Activated CD4-positive, alpha-beta T cell treated with anti-CD3 and anti-CD28 coated beads for 36 hours (primary cell): ENCODE measurements at regions of chr10 and their contacts with region 1.

Region 1: DNA sequence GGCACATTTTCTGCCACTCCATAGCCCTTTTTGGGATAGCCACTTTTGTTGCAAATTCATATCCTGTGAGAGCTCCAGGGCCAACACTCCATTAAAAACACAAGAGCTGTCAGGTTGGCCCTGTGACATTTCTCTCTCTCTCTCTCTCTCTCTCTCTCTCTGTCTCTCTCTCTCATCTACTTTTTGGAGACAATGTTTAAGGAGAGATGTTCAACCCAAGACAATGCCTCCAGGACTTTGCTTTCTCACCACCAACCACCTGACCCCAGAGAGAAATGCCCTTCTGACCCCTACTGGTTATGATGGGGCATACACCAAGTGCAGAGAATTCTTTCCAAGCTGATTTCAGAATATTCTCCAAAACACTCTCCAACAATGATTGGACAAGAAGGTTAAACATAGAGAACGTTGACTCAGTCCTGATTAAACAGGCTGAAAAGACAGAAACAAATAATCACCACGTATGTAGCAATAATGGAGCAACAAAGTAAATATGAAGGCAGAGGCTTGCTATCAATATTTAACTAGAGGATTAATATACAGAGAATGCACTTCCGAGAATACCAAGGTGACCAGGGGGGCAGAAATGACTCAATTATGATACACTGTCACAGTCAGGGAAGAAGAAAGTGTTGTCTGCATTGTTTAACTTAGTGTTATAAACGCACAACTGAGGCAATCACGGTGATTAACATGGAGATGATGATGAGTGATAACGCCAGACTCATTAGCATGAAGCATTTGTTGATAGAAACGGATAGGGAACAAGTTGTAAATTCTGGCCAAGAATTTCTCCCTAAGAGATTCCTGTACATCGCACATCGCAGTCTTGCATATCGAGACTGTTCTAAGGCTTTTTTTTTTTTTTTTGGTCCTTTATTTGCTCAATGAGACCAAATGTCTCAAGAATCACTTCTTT is 178.5 kb downstream of the NRP1 start:
- DNase-seq: peak; percentile 52
- ATAC-seq: peak; percentile 63
- H3K4me3 Mint-ChIP-seq: no peak overlapping the region
- H3K27ac Mint-ChIP-seq: peak overlapping the region; percentile 34
- H3K4me1 Mint-ChIP-seq: peaks cover 41% of the 10 kb centered on the region
- H3K27me3 Mint-ChIP-seq: peaks cover 7% of the 10 kb centered on the region

Region 2: GRCh38 chr10:32795598-32796183 is 360.3 kb before region 1 on chr10:
- CTCF ChIA-PET with region 1: no interaction called
- POLR2A ChIA-PET with region 1: no interaction called
- intact Hi-C with region 1: loop called (anchors 1 kb)
- DNase-seq: no peak
- ATAC-seq: no peak
- H3K4me3 Mint-ChIP-seq: no peak overlapping the region
- H3K27ac Mint-ChIP-seq: no peak overlapping the region
- H3K4me1 Mint-ChIP-seq: peaks cover 2% of the 10 kb centered on the region
- H3K27me3 Mint-ChIP-seq: no peaks in the 10 kb centered on the region

Region 3: DNA sequence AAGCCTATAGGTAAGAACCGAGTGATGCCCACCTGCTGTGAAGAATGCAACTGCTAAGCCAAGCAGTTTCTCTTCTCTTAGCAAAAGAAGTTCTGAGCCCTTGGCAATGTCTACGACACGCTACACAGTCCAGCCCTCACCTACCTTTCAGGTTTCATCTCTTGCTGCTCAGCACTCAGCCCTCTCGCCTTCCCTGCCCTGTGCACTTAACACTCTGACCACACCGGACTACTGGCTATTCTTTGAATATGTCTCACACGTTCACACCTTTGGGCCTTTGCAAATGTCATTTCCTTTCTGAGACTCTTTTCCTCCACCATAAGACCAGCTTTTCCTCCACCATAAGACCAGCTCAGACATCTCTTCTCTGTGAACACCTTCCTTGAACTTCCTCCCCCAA is 130.9 kb before region 1 on chr10:
- CTCF ChIA-PET with region 1: no interaction called
- POLR2A ChIA-PET with region 1: no interaction called
- intact Hi-C with region 1: loop called in 1 of 2 experiments (anchors 5 kb)
- DNase-seq: no peak
- ATAC-seq: no peak
- H3K4me3 Mint-ChIP-seq: no peak overlapping the region
- H3K27ac Mint-ChIP-seq: no peak overlapping the region
- H3K4me1 Mint-ChIP-seq: peaks cover 34% of the 10 kb centered on the region
- H3K27me3 Mint-ChIP-seq: no peaks in the 10 kb centered on the region

Region 4: DNA sequence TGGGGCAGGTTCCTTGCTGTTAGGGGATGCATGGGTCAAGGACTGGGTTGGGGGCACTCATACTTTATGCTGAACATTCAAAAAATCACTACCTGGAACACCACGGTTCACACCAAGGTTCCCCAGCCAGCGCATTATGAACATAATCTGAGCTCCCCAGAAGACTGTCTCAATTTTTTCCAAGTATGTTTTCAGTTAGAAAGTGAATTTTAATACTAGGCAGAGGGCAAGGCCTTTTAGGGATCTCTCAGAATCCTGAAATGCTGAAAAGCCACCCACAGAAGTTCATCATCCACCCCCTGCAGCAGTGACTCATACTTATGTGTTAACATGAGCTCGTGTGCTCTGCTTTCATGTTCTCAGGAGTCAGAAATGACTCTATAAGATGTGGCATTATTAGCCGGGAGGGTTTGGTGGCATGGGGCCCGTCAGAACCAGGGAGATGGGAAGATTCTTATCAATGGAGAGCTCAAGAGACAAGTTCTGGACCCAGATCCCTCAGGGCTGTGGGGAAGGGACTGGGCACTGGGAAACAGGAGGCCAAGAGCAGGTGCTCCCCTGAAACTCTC is 12.7 kb before region 1 on chr10:
- CTCF ChIA-PET with region 1: interaction called, 11 read pairs
- POLR2A ChIA-PET with region 1: interaction called, 9 read pairs
- intact Hi-C with region 1: loop called (anchors 1 kb)
- DNase-seq: peak; percentile 76
- ATAC-seq: peak; percentile 86
- H3K4me3 Mint-ChIP-seq: no peak overlapping the region
- H3K27ac Mint-ChIP-seq: peak overlapping the region; percentile 75
- H3K4me1 Mint-ChIP-seq: peaks cover 56% of the 10 kb centered on the region
- H3K27me3 Mint-ChIP-seq: peaks cover 2% of the 10 kb centered on the region

Region 5: GRCh38 chr10:33180390-33180789 is 24.4 kb after region 1 on chr10:
- CTCF ChIA-PET with region 1: no interaction called
- POLR2A ChIA-PET with region 1: no interaction called
- intact Hi-C with region 1: no loop called
- DNase-seq: peak; percentile 24
- ATAC-seq: peak; percentile 65
- H3K4me3 Mint-ChIP-seq: no peak overlapping the region
- H3K27ac Mint-ChIP-seq: no peak overlapping the region
- H3K4me1 Mint-ChIP-seq: peaks cover 7% of the 10 kb centered on the region
- H3K27me3 Mint-ChIP-seq: peaks cover 12% of the 10 kb centered on the region